Activated T-helper 1 cell treated with anti-CD3 and anti-CD28 coated beads, Interleukin-12 subunit alpha, Interleukin-12 subunit beta, Interleukin-2, Interleukin-4 antibody, amounts not matched to agents 30 ng/mL and 10 ng/mL and 1 ng/mL, durations not matched to agents 14 hours and 24 hours and 36 hours (primary cell): ENCODE measurements at regions of chr17 and their contacts with region 1.

Region 1: DNA sequence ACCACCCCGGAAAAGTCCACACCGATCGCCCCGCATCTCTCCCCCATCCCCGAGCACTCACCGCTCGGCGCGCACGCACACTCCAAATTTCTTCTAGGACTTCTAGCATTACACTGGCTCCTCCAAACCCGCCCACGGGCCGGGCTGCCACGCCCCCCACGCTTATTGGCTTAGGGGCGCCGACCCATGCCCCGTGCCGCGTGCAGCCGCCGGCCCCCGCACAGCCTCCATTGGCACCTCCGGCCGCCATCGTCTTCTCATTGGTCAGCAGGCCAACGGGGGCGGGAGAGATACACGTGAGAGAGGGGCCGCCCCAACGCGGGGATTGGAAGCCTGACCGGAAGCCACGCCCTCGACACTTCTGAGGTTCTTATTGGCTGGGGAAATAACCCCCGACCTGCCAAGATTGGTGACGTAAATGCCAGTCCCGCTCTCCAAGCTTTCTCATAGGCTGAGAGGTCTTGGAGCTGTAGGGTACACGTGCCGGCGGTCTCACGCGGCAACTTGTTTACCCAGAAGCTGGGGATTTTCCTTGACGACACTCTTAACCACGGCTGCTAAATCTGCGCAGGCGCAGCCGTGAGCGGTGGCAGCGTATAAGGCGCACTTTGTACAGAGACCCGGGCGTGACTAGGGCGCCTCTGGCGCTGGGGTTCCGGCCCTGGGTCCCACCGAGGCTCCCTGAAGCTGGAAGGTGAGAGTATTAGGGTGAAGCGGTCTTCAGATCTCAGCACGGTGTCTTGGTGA is 4.2 kb upstream of the PER1 start:
- DNase-seq: peak; percentile 100
- H3K4me3 Mint-ChIP-seq: no peak overlapping the region
- H3K27ac Mint-ChIP-seq: no peak overlapping the region
- H3K4me1 Mint-ChIP-seq: peaks cover 56% of the 10 kb centered on the region
- H3K27me3 Mint-ChIP-seq: no peaks in the 10 kb centered on the region

Region 2: GRCh38 chr17:7583253-7584109 is 572.9 kb before region 1 on chr17 and contains the start of gene MPDU1:
- intact Hi-C with region 1: loop called (anchors 10 kb)
- DNase-seq: peak; percentile 95
- H3K4me3 Mint-ChIP-seq: peak within 1 kb of the TSS; percentile 98
- H3K27ac Mint-ChIP-seq: peak within 1 kb of the TSS; percentile 100
- H3K4me1 Mint-ChIP-seq: peaks cover 54% of the 10 kb centered on the region
- H3K27me3 Mint-ChIP-seq: no peaks in the 10 kb centered on the region
- total RNA-seq, gene MPDU1: 108 and 111 TPM in 2 replicates

Region 3: GRCh38 chr17:8091033-8091687 is 65.3 kb before region 1 on chr17:
- intact Hi-C with region 1: loop called (anchors 2 kb)
- DNase-seq: no peak
- H3K4me3 Mint-ChIP-seq: no peak overlapping the region
- H3K27ac Mint-ChIP-seq: no peak overlapping the region
- H3K4me1 Mint-ChIP-seq: peaks cover 14% of the 10 kb centered on the region
- H3K27me3 Mint-ChIP-seq: peaks cover 24% of the 10 kb centered on the region

Region 4: GRCh38 chr17:8138672-8139371 is 17.6 kb before region 1 on chr17:
- intact Hi-C with region 1: loop called (anchors 1 kb)
- DNase-seq: peak; percentile 95
- H3K4me3 Mint-ChIP-seq: no peak overlapping the region
- H3K27ac Mint-ChIP-seq: no peak overlapping the region
- H3K4me1 Mint-ChIP-seq: no peaks in the 10 kb centered on the region
- H3K27me3 Mint-ChIP-seq: peaks cover 11% of the 10 kb centered on the region

Region 5: GRCh38 chr17:8248751-8249607 is 92.6 kb after region 1 on chr17 and contains the start of gene PFAS:
- intact Hi-C with region 1: loop called (anchors 1 kb)
- DNase-seq: peak; percentile 95
- H3K4me3 Mint-ChIP-seq: peak within 1 kb of the TSS; percentile 98
- H3K27ac Mint-ChIP-seq: peak within 1 kb of the TSS; percentile 100
- H3K4me1 Mint-ChIP-seq: peaks cover 40% of the 10 kb centered on the region
- H3K27me3 Mint-ChIP-seq: peaks cover 1% of the 10 kb centered on the region
- total RNA-seq, gene PFAS: 189 and 204 TPM in 2 replicates